Colonic mucosa (tissue), 4 donors: ENCODE measurements at regions of chr6 and their contacts with region 1.

Region 1: GRCh38 chr6:158793432-158793831 is 25.7 kb downstream of the EZR start:
- DNase-seq: no peak
- H3K4me3 ChIP-seq: no peak overlapping the region
- H3K27ac ChIP-seq: no peak overlapping the region
- H3K4me1 ChIP-seq: peaks cover 19% of the 10 kb centered on the region
- H3K27me3 ChIP-seq: no peaks in the 10 kb centered on the region
- CTCF ChIP-seq: peak; percentile 24

Region 2: GRCh38 chr6:158923805-158924498 is 130.5 kb after region 1 on chr6:
- intact Hi-C with region 1: no loop called
- DNase-seq: no peak
- H3K4me3 ChIP-seq: no peak overlapping the region
- H3K27ac ChIP-seq: peak overlapping the region; percentile 37
- H3K4me1 ChIP-seq: no peaks in the 10 kb centered on the region
- H3K27me3 ChIP-seq: no peaks in the 10 kb centered on the region
- CTCF ChIP-seq: no peak

Region 3: DNA sequence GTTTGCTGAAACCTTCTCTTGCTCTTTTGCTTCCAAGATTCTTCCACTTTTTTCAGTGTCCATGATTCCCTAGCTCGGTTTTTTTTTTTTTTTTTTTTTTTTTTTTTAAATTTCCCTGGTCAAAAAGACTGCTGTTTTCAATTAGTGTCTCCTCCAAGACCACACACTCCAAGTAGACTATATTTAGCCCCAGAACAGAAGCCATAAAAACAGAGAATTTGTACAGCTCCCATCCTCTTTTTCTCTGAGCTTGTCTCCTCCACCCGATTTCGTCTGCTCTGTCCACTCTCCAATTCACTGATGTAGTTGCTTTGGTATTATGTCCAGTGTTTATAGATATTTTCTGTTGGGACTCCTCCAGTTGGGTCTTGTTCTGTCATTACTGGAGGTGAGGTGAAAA is 168.9 kb after region 1 on chr6:
- intact Hi-C with region 1: loop called (anchors 10 kb)
- DNase-seq: no peak
- H3K4me3 ChIP-seq: no peak overlapping the region
- H3K27ac ChIP-seq: no peak overlapping the region
- H3K4me1 ChIP-seq: peaks cover 4% of the 10 kb centered on the region
- H3K27me3 ChIP-seq: no peaks in the 10 kb centered on the region
- CTCF ChIP-seq: no peak